Ascending aorta (tissue), 2 donors: ENCODE measurements at regions of chr19 and their contacts with region 1.

Region 1: GRCh38 chr19:1269065-1269477 is at the start of gene CIRBP:
- DNase-seq: peak; percentile 100
- H3K4me3 ChIP-seq: peak within 1 kb of the TSS; percentile 71 to 88
- H3K27ac ChIP-seq: peak within 1 kb of the TSS; percentile 94 to 95
- H3K4me1 ChIP-seq: peaks cover 34 to 71% of the 10 kb centered on the region in 2 donors
- H3K27me3 ChIP-seq: no peaks in the 10 kb centered on the region
- CTCF ChIP-seq: no peak
- total RNA-seq, gene CIRBP: 442 TPM

Region 2: DNA sequence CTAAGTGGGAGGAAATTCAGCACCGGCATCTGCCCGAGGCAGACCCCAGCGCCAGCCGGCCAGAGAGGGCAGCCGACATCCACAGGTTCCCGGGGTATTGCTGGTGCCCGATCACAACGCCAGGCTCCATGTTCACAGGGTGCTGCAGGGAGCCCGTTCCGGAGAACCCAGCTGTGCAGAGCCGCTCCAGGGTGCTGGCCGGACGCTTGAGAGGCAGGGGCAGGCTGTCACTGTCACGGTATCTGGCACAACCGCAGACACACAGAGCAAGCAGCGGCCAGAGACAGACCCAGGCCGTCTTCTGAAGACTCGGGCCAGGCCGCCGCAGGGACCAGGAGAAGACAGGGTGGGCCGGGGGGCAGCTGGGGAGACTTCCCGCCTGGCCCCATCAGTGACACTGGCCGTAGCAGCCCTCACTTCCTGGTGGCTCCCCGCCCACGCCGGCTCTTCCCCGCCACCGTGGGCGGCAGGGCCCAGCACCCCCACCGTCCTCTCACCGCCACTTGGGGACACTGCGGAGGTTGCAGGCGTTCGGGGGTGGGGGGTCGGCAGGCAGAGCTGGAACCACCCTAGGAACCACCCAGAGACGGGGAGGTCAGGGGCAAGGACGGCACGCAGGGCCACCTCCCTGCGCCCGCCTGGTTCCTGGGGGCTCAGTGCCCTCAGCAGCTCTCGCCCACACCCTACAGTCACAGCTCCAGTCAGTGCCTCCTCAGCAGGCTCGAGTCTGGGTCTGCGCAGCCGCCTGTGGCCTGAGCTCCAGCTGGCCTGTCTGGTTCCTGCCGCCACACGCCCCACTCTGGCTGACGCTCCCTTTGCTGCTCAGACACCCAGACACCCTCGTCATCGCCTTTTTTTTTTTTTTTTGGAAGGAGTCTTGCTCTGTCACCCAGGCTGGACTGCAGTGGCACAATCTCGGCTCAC is 609.9 kb before region 1 on chr19:
- intact Hi-C with region 1: no loop called
- DNase-seq: no peak
- H3K4me3 ChIP-seq: no peak overlapping the region
- H3K27ac ChIP-seq: peak overlapping the region in 1 of 2 donors; percentile 12
- H3K4me1 ChIP-seq: peaks cover 16 to 29% of the 10 kb centered on the region in 2 donors
- H3K27me3 ChIP-seq: no peaks in the 10 kb centered on the region
- CTCF ChIP-seq: no peak

Region 3: DNA sequence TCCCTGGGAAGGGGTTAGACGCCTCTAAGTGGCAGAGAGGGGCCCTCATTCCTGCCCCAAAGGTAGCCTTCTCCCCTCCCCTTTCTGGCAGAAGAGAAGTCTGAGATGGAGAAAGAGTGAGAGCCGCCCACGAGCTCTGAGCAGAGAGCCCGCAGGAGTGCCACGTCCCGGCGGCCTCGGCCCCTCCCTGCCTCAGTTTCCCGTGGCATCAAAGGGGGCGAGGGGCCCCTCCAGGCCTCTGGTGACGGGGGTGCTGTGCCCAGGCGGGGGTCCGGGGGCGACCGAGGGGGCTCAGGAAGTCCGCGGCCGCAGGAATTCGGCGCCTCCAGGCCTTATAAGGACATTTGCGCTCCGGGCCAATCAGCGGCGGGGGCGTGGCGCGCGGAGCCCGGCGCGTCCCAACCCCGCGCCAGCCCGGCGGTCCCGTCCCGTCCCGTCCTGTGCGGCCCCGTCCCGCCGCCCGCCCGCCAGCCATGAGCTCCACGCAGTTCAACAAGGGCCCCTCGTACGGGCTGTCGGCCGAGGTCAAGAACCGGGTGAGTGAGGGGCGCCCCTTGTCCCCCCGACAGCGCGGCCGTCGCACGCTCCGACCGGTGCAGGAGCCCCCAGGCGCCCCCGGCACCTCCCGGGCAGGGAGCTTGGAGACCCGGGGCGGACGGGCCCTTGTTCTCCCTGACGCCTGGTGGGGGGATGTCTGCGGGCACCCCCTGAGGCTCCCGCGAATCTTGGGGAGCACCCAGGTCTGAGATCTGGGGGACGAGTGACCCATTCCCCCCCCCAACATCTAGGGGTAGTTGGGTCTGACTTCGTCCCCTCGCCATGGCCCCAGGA is 242.7 kb before region 1 on chr19 and contains the start of gene CNN2:
- intact Hi-C with region 1: loop called (anchors 2 kb)
- DNase-seq: peak in 1 of 2 donors; percentile 90
- H3K4me3 ChIP-seq: peak within 1 kb of the TSS; percentile 95 to 97
- H3K27ac ChIP-seq: peak within 1 kb of the TSS; percentile 99 to 100
- H3K4me1 ChIP-seq: peaks cover 21 to 34% of the 10 kb centered on the region in 2 donors
- H3K27me3 ChIP-seq: no peaks in the 10 kb centered on the region
- CTCF ChIP-seq: no peak
- total RNA-seq, gene CNN2: 79.1 TPM

Region 4: GRCh38 chr19:1103708-1104310 is 165.3 kb before region 1 on chr19 and contains the start of gene GPX4:
- intact Hi-C with region 1: loop called (anchors 2 kb)
- DNase-seq: peak; percentile 95 to 99
- H3K4me3 ChIP-seq: peak within 1 kb of the TSS; percentile 84 to 93
- H3K27ac ChIP-seq: peak within 1 kb of the TSS; percentile 99
- H3K4me1 ChIP-seq: peaks cover 30 to 43% of the 10 kb centered on the region in 2 donors
- H3K27me3 ChIP-seq: no peaks in the 10 kb centered on the region
- CTCF ChIP-seq: no peak
- total RNA-seq, gene GPX4: 348 TPM

Region 5: GRCh38 chr19:1221141-1221903 is 47.7 kb before region 1 on chr19:
- intact Hi-C with region 1: loop called (anchors 2 kb)
- DNase-seq: peak in 1 of 2 donors; percentile 83
- H3K4me3 ChIP-seq: no peak overlapping the region
- H3K27ac ChIP-seq: peak overlapping the region; percentile 12 to 57
- H3K4me1 ChIP-seq: peaks cover 6 to 37% of the 10 kb centered on the region in 2 donors
- H3K27me3 ChIP-seq: no peaks in the 10 kb centered on the region
- CTCF ChIP-seq: peak; percentile 63 to 80 (median 74)

Region 6: DNA sequence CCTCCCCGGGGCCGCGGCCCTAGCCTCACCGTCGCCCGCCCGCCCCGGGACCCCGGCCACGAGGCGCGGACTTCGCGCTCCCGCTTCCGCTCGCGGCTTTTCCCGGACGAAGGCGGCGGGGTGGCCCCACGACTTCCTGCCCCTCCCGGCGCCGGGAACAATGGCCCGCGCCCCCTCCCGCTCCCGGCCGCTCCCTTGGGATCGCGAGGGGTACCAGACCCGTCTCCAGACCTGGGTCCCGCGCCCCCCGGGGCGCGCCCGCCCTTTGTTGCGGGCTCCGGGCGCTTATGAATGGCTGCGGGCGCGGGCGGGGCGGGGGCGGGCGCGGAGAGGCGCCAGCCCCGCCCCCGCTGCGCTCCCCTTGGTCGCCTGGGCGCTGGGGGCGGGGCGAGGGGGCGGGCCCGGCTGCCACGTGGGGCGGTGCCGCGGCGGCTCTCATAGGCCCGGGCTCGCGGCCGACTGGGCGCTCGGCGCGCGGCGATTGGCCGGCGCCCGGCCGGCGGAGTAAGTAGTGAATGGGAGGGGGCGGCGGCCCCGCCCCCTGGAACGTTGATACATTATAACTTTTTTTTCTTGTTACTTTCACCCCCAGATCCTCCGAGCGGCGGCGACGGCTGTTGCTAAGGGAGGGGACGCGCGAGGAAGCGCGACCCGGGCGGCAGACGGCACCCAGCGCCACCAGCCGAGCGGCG is 19.6 kb before region 1 on chr19:
- intact Hi-C with region 1: loop called (anchors 1 kb)
- DNase-seq: peak; percentile 91 to 98
- H3K4me3 ChIP-seq: peak overlapping the region; percentile 95
- H3K27ac ChIP-seq: peak overlapping the region; percentile 94 to 99
- H3K4me1 ChIP-seq: peaks cover 32 to 45% of the 10 kb centered on the region in 2 donors
- H3K27me3 ChIP-seq: no peaks in the 10 kb centered on the region
- CTCF ChIP-seq: no peak

Region 7: DNA sequence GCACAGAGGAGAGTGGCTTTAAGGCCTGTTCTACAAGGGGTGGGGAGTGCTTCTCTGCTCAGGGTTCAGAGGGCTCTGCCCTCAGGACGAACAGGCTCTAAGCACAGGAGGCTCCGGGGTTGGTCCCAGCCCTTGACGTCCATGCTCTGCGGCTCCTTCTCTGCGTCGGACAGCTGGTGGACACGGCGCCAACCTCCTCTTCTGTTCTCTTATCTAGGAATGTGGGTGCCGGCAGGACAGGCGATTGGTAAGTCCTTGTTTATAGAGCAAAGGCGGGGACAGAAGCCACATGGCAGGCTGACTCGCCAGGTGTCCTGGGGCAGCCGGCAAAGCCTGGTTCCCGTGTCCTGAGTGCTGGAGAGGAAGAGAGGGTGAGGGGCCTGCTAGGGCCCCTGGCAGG is 160.7 kb after region 1 on chr19:
- intact Hi-C with region 1: no loop called
- DNase-seq: no peak
- H3K4me3 ChIP-seq: no peak overlapping the region
- H3K27ac ChIP-seq: no peak overlapping the region
- H3K4me1 ChIP-seq: no peaks in the 10 kb centered on the region
- H3K27me3 ChIP-seq: no peaks in the 10 kb centered on the region
- CTCF ChIP-seq: no peak